Activated CD4-positive, alpha-beta memory T cell treated with anti-CD3 and anti-CD28 coated beads for 36 hours (primary cell): ENCODE measurements at regions of chr1 and their contacts with region 1.

Region 1: GRCh38 chr1:66258404-66259105 is 275.4 kb upstream of the SGIP1 start:
- DNase-seq: no peak
- H3K4me3 Mint-ChIP-seq: no peak overlapping the region
- H3K27ac Mint-ChIP-seq: peak overlapping the region; percentile 64
- H3K4me1 Mint-ChIP-seq: peaks cover 85% of the 10 kb centered on the region
- H3K27me3 Mint-ChIP-seq: no peaks in the 10 kb centered on the region

Region 2: DNA sequence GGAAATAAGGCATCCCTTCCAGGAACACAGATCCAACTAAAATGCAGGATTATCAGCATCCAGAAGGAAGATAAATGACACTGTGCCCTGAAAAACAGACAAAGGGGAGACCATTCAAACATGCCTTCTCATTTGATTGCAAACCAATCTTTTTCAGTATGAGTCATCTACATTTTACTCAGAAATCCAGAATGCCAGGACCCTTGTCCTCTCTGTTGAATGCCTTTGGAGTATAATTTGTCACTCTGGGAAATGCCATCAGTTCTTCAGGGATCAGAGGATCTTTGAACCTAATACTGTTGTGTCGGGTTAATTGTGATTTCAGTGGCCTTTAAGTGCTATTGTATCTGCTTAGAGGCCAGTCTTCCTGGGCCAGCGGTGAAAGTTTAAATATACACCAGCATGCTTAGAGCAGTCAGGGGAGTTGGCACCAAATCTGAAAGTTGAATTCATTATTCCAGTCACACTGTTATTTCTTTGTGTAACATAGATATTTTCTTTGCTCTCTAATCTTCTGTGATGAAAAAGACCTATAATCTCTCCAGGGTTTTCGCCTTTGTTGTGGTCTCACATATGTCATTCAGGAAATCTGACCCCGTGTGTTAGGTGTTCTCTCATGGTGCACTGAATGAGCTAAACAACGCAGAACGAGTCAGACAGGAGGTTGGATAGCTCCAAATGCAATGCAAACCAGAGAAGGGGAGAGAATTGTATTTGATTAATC is 89.4 kb before region 1 on chr1:
- CTCF ChIA-PET with region 1: no interaction called
- POLR2A ChIA-PET with region 1: no interaction called
- intact Hi-C with region 1: no loop called
- DNase-seq: no peak
- H3K4me3 Mint-ChIP-seq: no peak overlapping the region
- H3K27ac Mint-ChIP-seq: no peak overlapping the region
- H3K4me1 Mint-ChIP-seq: peaks cover 13% of the 10 kb centered on the region
- H3K27me3 Mint-ChIP-seq: peaks cover 3% of the 10 kb centered on the region

Region 3: GRCh38 chr1:66270119-66270812 is 11.7 kb after region 1 on chr1:
- CTCF ChIA-PET with region 1: interaction called, 15 read pairs
- POLR2A ChIA-PET with region 1: interaction called, 29 read pairs
- intact Hi-C with region 1: loop called (anchors 1 kb)
- DNase-seq: no peak
- H3K4me3 Mint-ChIP-seq: no peak overlapping the region
- H3K27ac Mint-ChIP-seq: no peak overlapping the region
- H3K4me1 Mint-ChIP-seq: peaks cover 61% of the 10 kb centered on the region
- H3K27me3 Mint-ChIP-seq: no peaks in the 10 kb centered on the region

Region 4: DNA sequence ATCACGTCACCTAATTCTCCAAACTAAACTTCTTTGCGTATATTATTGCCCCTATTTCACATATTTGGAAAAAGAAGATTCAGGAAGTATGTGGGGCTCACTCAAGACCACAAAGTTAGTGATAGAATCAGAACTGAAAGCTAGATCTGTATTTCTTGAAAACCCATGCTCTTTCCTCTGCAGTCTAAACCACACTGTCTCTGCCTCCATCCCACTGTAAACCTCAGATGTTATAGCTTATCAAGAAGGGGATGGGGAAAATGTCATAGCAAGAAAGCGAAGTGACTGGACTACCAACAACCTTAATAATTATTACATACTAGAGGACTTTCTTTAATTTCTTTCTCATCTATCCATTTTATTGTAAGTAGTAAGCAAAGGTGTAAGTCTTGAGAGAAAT is 17.7 kb after region 1 on chr1:
- CTCF ChIA-PET with region 1: interaction called, 15 read pairs
- POLR2A ChIA-PET with region 1: interaction called, 29 read pairs
- intact Hi-C with region 1: loop called (anchors 1 kb)
- DNase-seq: peak; percentile 44
- H3K4me3 Mint-ChIP-seq: peak overlapping the region; percentile 49
- H3K27ac Mint-ChIP-seq: peak overlapping the region; percentile 65
- H3K4me1 Mint-ChIP-seq: peaks cover 87% of the 10 kb centered on the region
- H3K27me3 Mint-ChIP-seq: no peaks in the 10 kb centered on the region

Region 5: DNA sequence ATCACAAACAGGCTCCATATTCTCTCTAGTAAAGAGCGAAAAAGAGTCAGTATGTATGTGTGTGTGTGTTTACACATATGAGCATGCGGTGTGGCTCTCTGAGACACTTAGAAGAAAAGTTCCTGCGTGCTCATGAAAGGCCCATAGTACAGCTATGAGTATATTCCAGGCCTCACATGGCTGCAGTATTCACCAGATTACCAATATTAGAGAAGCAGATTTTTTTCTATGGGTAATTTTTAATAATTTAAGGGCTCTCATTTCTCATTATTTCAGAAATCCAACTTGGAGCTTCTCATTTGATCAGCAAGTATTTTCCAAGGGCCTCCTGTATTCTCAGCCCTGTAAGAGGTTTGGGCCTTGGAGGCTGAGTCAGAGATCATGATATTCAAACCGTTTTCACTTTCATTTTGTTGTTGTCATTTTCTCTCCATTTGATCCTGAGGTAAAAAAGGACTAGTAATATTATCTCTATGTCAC is 42.5 kb after region 1 on chr1:
- CTCF ChIA-PET with region 1: no interaction called
- POLR2A ChIA-PET with region 1: no interaction called
- intact Hi-C with region 1: loop called (anchors 1 kb)
- DNase-seq: peak; percentile 60
- H3K4me3 Mint-ChIP-seq: peak overlapping the region; percentile 65
- H3K27ac Mint-ChIP-seq: peak overlapping the region; percentile 77
- H3K4me1 Mint-ChIP-seq: peaks cover 50% of the 10 kb centered on the region
- H3K27me3 Mint-ChIP-seq: no peaks in the 10 kb centered on the region

Region 6: DNA sequence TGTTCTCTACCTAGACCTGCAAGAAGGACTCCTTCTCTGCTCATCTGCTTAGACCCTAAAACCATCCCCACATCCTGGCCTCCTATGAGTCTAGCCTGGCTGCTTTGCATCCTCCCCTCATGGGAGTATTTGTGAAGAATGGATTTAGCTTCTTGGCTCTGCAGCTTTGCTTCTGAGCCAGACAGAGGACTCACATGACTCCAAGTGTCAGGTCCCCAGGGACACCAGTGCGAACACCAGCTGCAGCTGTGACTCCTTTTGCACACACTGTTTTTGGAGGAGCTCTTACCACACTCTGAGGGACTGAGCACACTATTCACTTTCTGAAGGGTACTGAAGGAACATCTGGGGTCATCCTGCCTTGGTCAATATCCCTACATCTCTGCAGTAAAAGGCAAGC is 143.6 kb after region 1 on chr1:
- CTCF ChIA-PET with region 1: no interaction called
- POLR2A ChIA-PET with region 1: interaction called, 3 read pairs
- intact Hi-C with region 1: loop called (anchors 1 kb)
- DNase-seq: no peak
- H3K4me3 Mint-ChIP-seq: no peak overlapping the region
- H3K27ac Mint-ChIP-seq: no peak overlapping the region
- H3K4me1 Mint-ChIP-seq: peaks cover 31% of the 10 kb centered on the region
- H3K27me3 Mint-ChIP-seq: no peaks in the 10 kb centered on the region